Activated CD4-positive, alpha-beta T cell treated with anti-CD3 and anti-CD28 coated beads, Interleukin-2, amount 10 ng/mL, durations not matched to agents 24 days and 14 days (primary cell): ENCODE measurements at regions of chr19 and their contacts with region 1.

Region 1: DNA sequence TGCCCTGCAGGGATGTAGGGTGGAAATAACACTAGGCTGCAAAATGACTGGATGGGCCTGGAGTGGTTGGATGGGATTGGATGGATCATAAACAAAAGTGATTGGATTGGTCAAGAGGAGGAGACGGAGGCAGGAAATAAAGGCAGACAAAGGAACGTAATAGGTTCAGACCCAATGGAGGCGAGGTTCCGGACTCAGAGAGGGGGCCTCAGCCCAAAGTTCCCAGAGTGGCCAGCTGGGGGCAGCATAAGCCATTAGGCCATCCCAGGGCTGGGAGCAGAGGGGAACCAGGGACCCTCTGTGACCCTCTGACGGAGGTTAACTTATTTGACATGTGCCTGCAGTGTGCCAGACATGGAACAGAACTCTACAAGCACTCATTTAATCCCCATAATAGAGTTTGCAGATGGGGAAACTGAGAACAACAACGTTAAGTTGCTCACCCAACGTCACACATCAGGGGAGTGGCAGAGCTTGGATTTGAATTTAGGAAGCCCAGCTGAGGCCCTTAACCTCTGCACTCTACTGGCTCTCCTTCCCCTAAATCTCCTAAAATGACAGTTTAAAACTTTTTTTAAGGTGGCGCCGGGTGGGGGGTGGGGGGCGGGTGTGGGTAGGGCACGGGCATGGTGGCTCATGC is 15.3 kb upstream of the MAP1S start:
- DNase-seq: peak; percentile 92
- H3K4me3 Mint-ChIP-seq: no peak overlapping the region
- H3K27ac Mint-ChIP-seq: no peak overlapping the region
- H3K4me1 Mint-ChIP-seq: no peaks in the 10 kb centered on the region
- H3K27me3 Mint-ChIP-seq: peaks cover 5% of the 10 kb centered on the region

Region 2: GRCh38 chr19:17766543-17767131 is 62.7 kb after region 1 on chr19:
- intact Hi-C with region 1: loop called (anchors 1 kb)
- DNase-seq: peak; percentile 88
- H3K4me3 Mint-ChIP-seq: no peak overlapping the region
- H3K27ac Mint-ChIP-seq: no peak overlapping the region
- H3K4me1 Mint-ChIP-seq: peaks cover 9% of the 10 kb centered on the region
- H3K27me3 Mint-ChIP-seq: no peaks in the 10 kb centered on the region

Region 3: DNA sequence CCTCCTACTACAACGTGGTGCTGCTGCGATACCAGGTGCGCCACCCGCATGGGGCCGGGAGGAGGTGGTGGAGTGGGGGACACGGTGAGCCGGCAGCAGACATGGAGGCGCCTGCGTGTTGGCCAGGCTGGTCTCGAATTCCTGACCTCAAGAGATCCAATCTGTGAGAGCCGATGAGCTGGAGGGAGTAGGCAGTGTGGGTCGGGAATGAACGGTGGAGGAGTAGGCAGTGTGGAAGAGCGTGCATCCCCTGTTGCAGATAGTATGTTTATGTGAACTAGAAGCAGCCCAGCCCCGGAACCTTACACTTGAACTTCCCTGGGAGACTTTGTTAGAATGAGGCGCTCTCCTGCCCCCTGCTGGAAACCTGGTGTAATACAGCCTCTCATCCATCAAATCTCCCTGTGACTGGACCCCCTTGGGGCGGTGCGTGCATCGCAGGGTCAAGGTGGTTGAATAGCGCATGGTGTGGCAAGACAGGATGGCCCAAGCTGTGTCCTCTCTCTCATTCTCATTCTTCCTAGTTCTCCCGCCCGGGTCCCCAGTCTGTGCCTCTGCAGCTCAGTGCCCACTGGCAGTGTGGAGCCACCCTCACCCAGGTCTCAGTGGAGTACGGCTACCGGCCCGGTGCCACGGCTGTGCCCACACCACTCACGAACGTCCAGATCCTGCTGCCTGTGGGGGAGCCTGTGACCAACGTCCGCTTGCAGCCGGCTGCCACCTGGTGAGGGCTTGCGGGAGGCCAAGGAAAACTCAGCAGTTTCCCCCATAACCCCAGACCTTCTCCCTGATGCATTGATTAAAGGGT is 80.5 kb after region 1 on chr19:
- intact Hi-C with region 1: loop called (anchors 2 kb)
- DNase-seq: peak; percentile 91
- H3K4me3 Mint-ChIP-seq: no peak overlapping the region
- H3K27ac Mint-ChIP-seq: peak overlapping the region; percentile 45
- H3K4me1 Mint-ChIP-seq: peaks cover 9% of the 10 kb centered on the region
- H3K27me3 Mint-ChIP-seq: no peaks in the 10 kb centered on the region